RWPE1 (cell line): ENCODE measurements at regions of chr7 and their contacts with region 1.

Region 1: DNA sequence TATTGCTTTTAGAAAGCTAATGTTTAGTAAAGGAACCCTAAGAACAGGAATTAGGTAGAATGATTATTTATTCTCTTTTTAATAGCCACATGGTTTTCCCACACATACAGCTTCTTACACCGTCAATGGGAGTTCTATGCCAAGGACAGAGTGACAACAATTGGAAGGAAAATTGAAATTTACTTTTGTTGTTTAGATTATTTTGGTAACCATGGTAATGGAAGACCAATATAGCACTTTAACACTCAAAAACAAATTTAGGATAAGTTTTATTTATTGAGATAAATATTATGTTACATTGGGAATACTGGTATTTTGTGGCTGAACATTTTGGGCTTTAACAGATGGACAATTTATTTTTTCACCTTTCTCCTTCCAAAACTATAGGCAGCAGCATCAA is 360.5 kb downstream of the ARL4A start:
- DNase-seq: no peak
- H3K27ac ChIP-seq: no peak overlapping the region
- CTCF ChIP-seq: no peak

Region 2: DNA sequence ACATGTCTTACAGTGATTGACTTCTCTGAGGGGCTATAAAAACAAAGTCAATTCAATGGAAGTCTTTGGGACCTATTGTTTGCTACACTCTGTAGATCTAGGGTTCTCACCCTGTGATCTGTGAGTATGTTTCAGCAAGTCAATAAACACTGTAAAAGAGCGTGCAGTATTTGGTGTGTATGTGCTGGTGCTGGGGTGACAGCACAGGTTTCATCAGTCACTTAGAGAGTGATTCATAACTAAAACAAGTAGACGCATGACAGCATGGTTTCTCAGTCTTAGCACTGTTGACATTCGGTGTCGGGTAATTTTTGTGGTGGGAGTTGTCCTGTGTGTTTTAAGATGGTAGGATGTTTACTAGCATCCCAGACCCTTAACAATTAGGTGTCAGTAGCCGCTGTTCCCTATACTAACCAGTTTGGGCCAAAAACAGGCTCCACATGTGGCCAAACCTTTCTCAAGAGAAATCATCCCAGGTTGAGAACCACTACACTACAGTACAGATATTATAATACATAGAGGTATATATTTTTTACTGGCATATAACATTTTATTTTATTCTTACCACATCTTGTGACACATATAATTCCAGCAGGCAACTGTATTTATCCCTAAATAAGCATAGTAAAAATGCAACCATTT is 51.3 kb after region 1 on chr7:
- CTCF ChIA-PET with region 1: interaction called, 11 read pairs
- POLR2A ChIA-PET with region 1: no interaction called
- DNase-seq: peak; percentile 49
- H3K27ac ChIP-seq: no peak overlapping the region
- CTCF ChIP-seq: no peak